ENCODE measurements at regions of chr12 and their contacts with region 1.

Region 1: GRCh38 chr12:51980051-51980808 is 26.5 kb upstream of the TAMALIN start:
- DNase-seq: peak; percentile 80
- H3K4me3 Mint-ChIP-seq: no peak overlapping the region
- H3K27ac Mint-ChIP-seq: no peak overlapping the region
- H3K4me1 Mint-ChIP-seq: no peaks in the 10 kb centered on the region
- H3K27me3 Mint-ChIP-seq: no peaks in the 10 kb centered on the region
- CTCF ChIP-seq: peak; percentile 86

Region 2: DNA sequence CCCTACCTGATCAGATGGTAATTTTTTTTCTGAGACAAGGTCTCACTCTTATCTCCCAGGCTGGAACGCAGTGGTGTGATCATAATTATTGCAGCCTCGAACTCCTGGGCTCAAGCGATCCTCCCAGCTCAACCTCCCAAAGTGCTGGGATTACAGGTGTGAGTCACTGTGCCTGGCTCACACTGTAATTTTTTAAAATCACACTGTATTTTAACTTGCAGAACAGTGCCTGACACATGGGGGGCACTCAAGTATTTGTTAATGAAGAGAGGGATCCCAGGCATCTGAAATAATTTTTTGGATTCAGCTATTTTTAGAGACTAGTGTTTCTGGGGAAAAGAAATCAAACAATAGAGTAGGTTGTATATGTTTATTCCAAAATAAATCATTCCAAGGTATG is 1718.6 kb before region 1 on chr12:
- CTCF ChIA-PET with region 1: no interaction called
- POLR2A ChIA-PET with region 1: no interaction called
- intact Hi-C with region 1: no loop called
- DNase-seq: peak; percentile 57
- H3K4me3 Mint-ChIP-seq: no peak overlapping the region
- H3K27ac Mint-ChIP-seq: no peak overlapping the region
- H3K4me1 Mint-ChIP-seq: peaks cover 36% of the 10 kb centered on the region
- H3K27me3 Mint-ChIP-seq: no peaks in the 10 kb centered on the region
- CTCF ChIP-seq: no peak

Region 3: DNA sequence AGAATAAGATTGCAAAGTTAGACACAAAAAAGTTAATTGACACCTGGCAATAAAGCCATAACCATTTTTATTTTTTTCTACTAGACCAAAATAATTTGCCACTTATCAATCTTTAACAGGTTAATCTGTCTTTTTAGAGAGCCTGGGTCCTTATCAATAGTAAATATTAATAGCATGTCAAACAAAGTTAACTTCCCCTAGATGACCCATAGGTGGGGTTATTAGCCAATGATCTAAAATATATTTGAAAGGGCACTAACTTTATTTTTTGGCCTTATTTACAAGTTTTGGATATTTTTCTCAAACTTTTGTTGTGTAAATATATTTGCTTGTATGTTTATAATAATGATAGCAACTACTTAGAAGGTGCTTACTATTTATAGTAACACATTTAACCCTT is 88.4 kb before region 1 on chr12:
- CTCF ChIA-PET with region 1: interaction called, 8 read pairs
- POLR2A ChIA-PET with region 1: interaction called, 3 read pairs
- intact Hi-C with region 1: loop called (anchors 1 kb)
- DNase-seq: no peak
- H3K4me3 Mint-ChIP-seq: no peak overlapping the region
- H3K27ac Mint-ChIP-seq: no peak overlapping the region
- H3K4me1 Mint-ChIP-seq: no peaks in the 10 kb centered on the region
- H3K27me3 Mint-ChIP-seq: no peaks in the 10 kb centered on the region
- CTCF ChIP-seq: peak; percentile 36

Region 4: DNA sequence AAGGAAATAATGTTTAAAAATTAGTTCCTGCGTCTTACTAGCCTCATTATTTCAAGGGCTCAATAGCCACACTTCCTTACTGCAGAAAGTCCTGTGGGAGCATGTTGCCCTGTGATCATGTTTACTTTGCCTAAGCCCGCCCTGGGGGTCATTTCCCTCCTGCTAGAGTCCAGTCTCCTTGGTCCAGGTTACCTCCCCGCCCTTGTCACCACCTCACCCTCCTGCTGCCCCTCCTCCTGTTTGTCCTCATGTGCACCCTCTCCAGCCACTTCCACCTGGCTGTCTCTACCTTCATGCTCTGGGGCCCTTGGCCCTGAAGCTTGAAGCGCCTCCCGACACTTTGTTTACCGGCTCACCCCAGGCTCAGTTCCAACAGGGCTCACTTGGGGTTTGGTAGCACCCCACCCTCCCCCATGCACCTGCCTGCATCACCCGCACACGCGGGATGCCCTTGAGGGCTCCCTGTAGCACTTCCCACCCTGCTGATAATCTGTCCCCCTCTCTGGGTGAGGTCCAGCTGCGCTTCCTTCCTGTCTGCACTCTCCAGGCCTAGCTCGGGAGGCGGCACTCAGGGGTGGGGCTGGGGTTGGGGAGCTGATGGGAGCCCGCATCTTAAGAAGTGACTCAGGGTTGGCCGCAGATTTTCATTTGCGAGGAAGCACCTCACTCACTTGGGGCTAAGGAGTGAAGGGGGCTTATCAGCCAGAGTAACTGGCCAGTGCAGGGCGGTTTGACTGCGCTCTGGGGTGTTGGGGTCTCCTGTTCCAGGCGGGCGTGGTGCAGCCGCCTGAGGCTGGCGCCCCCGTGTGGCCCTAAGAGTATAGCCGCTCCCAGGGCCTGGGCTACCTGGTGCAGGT is 139.4 kb after region 1 on chr12:
- CTCF ChIA-PET with region 1: no interaction called
- POLR2A ChIA-PET with region 1: no interaction called
- intact Hi-C with region 1: no loop called
- DNase-seq: peak; percentile 55
- H3K4me3 Mint-ChIP-seq: no peak overlapping the region
- H3K27ac Mint-ChIP-seq: no peak overlapping the region
- H3K4me1 Mint-ChIP-seq: no peaks in the 10 kb centered on the region
- H3K27me3 Mint-ChIP-seq: peaks cover 11% of the 10 kb centered on the region
- CTCF ChIP-seq: peak; percentile 50